ENCODE measurements at regions of chr6 and their contacts with region 1.

Region 1: DNA sequence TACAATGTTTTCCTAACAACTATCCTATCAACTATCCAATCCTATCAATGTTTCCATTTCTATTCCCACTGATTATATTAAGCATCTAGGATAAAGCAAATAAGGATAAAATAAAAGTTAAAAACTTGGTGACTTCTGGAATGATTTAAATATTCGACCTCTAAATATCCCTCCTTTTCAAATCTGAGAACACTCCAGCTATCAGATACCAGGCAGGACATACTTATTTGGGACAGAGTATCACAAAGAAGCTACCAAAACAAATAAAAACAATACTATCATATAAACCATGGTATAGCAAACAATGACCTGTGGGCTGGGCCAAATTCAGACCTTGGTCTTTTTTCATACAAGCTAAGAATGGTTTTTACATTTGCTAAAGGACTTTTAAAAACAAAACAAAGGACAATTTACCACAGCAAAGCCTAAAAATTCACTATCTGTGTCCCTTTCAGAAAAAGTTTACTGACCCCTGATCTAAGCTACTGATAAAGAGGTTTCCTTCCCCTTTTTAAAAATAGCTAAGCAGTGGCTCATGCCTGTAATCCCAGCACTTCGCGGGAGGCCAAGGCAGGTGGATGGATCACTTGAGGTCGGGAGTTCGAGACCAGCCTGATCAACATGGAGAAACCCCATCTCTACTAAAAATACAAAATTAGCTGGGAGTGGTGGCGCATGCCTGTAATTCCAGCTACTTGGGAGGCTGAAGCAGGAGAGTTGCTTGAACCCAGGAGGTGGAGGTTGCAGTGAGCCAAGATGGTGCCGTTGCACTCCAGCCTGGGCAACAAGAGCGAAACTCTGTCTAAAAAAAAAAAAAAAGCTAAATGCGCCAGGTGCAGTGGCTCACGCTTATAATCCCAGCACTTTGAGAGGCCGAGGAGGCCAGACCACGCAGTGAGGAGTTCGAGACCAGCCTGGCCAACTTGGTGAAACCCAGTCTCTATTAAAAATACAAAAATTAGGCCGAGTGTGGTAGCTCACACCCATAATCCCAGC is 6.0 kb downstream of the NUP153 start:
- DNase-seq: no peak
- H3K4me3 Mint-ChIP-seq: no peak overlapping the region
- H3K27ac Mint-ChIP-seq: peak overlapping the region; percentile 72
- H3K4me1 Mint-ChIP-seq: peaks cover 47% of the 10 kb centered on the region
- H3K27me3 Mint-ChIP-seq: no peaks in the 10 kb centered on the region

Region 2: DNA sequence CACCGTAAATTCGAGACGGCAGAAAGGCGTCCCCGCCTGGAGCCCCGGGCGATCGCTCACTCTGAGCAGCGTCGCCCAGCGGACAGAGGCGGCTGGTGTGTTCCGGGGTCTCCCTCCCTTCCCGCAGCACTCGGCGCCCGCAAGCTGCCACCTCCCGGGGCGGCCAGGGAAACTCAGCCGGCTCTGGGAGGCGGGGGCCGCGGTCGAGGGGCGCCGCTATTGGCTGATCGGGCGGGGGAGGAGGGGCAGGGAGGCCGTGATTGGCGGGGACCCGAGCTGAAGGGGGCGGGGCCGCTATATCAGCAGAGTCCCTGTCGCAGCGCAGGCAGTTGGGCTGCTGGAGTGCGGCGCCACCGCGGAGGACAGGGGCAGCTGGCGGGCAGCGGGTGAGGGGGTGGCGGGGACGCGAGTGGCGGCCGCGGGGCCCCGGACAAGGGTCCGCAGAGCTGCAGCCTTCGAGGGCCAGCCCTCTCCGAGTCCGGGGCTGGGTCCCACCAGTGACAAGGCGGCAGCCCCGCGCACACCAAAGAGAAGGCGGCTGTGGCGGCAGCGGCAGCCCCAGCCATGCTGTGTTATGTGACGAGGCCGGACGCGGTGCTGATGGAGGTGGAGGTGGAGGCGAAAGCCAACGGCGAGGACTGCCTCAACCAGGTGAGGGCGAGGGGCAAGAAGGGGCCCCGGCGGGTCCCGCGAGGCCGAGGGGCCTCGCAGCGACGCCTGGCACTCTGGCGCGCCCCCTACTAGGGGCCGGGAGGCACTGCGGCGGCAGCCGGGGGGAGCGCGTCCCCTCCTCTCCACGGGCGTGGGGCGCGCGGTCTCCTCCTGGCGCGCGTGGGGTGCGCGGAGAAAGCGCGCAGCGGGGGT is 1571.7 kb before region 1 on chr6 and contains the start of gene MYLIP:
- CTCF ChIA-PET with region 1: no interaction called
- POLR2A ChIA-PET with region 1: no interaction called
- intact Hi-C with region 1: loop called (anchors 5 kb)
- DNase-seq: peak; percentile 98
- H3K4me3 Mint-ChIP-seq: peak within 1 kb of the TSS; percentile 93
- H3K27ac Mint-ChIP-seq: peak within 1 kb of the TSS; percentile 94
- H3K4me1 Mint-ChIP-seq: peaks cover 28% of the 10 kb centered on the region
- H3K27me3 Mint-ChIP-seq: no peaks in the 10 kb centered on the region
- total RNA-seq, gene MYLIP: 11.4 TPM

Region 3: GRCh38 chr6:17015144-17015543 is 685.6 kb before region 1 on chr6:
- CTCF ChIA-PET with region 1: no interaction called
- POLR2A ChIA-PET with region 1: no interaction called
- intact Hi-C with region 1: loop called (anchors 5 kb)
- DNase-seq: peak; percentile 44
- H3K4me3 Mint-ChIP-seq: peak overlapping the region; percentile 54
- H3K27ac Mint-ChIP-seq: no peak overlapping the region
- H3K4me1 Mint-ChIP-seq: peaks cover 18% of the 10 kb centered on the region
- H3K27me3 Mint-ChIP-seq: peaks cover 27% of the 10 kb centered on the region

Region 4: DNA sequence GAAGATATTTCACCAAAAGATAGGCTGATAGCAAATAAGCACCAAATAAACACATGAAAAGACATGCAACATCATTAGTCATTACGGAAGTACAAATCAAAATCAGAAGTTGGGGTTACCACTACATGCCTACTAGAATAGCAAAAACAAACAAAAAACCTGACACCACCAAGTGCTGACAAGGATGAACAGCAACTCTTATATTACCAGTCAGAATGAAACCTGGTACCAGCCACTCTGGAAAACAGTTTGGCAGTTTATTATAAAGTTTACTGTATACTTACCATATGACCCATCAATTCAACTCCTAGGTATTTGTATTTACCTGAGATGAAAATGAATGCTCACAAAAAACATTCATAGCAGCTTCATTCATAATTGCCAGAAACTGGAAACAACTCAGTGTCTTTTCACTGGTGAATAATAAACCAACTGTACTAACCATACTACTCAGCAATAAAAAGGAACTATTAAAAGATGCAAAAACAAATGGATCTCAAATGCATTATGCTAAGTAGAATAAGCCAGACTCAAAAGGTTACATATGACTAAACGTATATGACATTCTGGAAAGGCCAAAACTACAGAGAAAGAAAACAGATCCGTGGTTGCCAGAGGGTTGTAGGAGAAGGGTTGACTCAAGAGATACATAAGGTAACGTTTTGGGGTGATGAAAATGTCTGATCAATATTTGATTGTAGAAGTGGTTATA is 27.0 kb before region 1 on chr6:
- CTCF ChIA-PET with region 1: interaction called, 16 read pairs
- POLR2A ChIA-PET with region 1: interaction called, 3 read pairs
- intact Hi-C with region 1: loop called (anchors 1 kb)
- DNase-seq: no peak
- H3K4me3 Mint-ChIP-seq: no peak overlapping the region
- H3K27ac Mint-ChIP-seq: peak overlapping the region; percentile 73
- H3K4me1 Mint-ChIP-seq: peaks cover 35% of the 10 kb centered on the region
- H3K27me3 Mint-ChIP-seq: no peaks in the 10 kb centered on the region

Region 5: DNA sequence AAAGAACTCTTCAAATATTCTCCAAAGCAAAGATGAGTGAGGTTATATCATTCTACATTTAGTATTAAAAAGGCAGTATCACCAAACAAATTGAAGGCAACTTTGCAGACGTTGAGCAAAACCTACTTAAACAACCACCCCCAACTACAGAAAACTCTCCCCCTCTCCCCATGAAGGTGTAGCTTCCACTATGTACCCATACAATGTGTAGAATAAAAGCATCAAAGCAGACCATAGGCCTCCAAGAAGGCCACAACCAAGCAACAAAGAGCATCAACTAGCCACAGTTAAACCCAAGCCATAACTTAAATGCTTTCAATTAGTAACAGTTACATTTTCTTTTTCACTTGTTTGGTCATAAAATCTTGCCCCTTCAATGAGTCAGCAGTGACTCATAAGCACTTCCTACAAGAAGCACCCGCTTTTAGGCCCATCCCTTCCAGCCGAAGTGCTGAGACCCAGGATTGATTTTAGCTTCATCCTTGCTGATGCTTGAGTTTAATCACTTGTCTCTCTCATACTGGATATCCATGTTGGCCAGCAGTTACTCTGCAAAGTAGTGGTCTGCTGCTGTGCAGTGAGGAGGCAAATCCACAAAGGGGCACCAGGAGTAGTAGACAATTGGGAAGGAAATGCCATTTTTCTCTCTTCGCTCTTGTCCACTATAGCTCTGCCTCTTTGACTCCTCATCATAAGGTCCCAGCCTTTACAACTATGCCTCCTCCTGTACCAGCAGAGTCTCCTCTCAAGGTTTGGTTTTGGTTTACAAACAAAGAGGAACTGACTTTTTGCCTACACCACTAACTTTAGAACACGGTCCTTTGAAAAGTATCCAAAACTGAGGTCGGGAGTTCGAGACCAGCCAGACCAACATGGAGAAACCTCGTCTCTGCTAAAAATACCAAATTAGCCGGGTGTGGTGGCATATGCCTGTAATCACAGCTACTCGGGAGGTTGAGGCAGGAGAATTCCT is 14.4 kb after region 1 on chr6:
- CTCF ChIA-PET with region 1: interaction called, 23 read pairs
- POLR2A ChIA-PET with region 1: interaction called, 11 read pairs
- intact Hi-C with region 1: no loop called
- DNase-seq: peak; percentile 59
- H3K4me3 Mint-ChIP-seq: peak overlapping the region; percentile 63
- H3K27ac Mint-ChIP-seq: peak overlapping the region; percentile 88
- H3K4me1 Mint-ChIP-seq: peaks cover 16% of the 10 kb centered on the region
- H3K27me3 Mint-ChIP-seq: no peaks in the 10 kb centered on the region

Region 6: GRCh38 chr6:17803409-17803808 is 102.7 kb after region 1 on chr6:
- CTCF ChIA-PET with region 1: interaction called, 29 read pairs
- POLR2A ChIA-PET with region 1: no interaction called
- intact Hi-C with region 1: loop called (anchors 1 kb)
- DNase-seq: no peak
- H3K4me3 Mint-ChIP-seq: no peak overlapping the region
- H3K27ac Mint-ChIP-seq: no peak overlapping the region
- H3K4me1 Mint-ChIP-seq: no peaks in the 10 kb centered on the region
- H3K27me3 Mint-ChIP-seq: peaks cover 8% of the 10 kb centered on the region